ENCODE measurements at regions of chr22 and their contacts with region 1.

Region 1: GRCh38 chr22:38272373-38273134 is at the start of gene TMEM184B:
- DNase-seq: peak; percentile 77
- total RNA-seq, gene TMEM184B: 16.2 and 20.5 TPM in 2 replicates

Region 2: DNA sequence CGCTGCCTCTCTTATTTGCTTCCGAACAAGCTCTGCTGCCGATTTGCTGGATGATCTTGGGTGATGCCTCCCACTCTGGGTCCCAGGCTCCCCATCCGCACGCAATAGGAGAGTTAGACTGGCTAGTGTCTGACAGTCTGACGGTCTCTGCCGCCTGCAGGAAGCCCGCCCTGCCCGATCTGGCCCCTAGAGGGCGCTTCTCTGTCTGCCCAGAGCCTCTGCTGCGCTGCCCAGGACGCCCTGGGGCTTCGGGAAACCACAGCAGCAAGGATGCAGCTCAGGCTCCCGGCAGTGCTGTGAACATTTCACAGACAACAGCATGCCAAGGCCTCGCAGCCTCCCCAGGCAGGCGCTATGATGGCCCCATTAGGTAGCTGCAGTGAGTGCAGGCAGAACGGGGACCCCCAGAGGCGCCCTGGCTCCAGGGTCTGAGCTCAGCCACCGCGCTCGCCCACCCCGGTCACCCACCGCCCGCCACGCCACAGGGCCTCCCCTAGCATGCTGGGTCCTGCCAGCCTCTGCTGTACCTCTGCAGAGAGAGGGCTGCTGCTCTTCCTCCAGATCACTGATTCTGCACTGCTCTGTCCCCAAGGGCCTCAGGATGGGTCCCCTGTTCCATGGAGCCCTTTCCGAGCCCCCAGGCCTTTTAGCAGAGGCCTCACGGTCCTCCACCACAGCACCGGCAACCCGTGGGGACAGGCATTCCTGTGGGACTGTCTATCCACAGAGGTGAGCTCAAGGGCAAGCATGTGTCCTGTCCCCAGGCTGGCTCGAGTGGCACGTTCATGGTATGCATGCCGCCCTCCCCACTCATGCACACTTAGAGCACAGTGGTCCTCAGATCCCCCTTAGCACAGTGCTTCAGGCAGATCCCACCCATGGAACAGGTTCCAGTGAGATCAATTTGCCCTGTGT is 157.8 kb before region 1 on chr22:
- in situ Hi-C with region 1: loop called (anchors 25 kb)
- DNase-seq: peak; percentile 86

Measured in G401 (cell line).